ENCODE measurements at regions of chr2 and their contacts with region 1.

Region 1: GRCh38 chr2:173021939-173022371 is 53.7 kb upstream of the MAP3K20 start:
- DNase-seq: no peak
- ATAC-seq: no peak
- H3K4me3 ChIP-seq: no peak overlapping the region
- H3K4me3 Mint-ChIP-seq: no peak overlapping the region
- H3K27ac ChIP-seq: no peak overlapping the region
- H3K27ac Mint-ChIP-seq: no peak overlapping the region
- H3K4me1 ChIP-seq: no peaks in the 10 kb centered on the region
- H3K4me1 Mint-ChIP-seq: no peaks in the 10 kb centered on the region
- H3K27me3 ChIP-seq: no peaks in the 10 kb centered on the region
- H3K27me3 Mint-ChIP-seq: no peaks in the 10 kb centered on the region
- CTCF ChIP-seq: no peak

Region 2: GRCh38 chr2:172806493-172806892 is 215.5 kb before region 1 on chr2:
- CTCF ChIA-PET with region 1: no interaction called
- POLR2A ChIA-PET with region 1: no interaction called
- intact Hi-C with region 1: loop called (anchors 5 to 10 kb)
- DNase-seq: peak in 2 of 9 experiments; percentile 19 to 38
- ATAC-seq: no peak
- H3K4me3 ChIP-seq: no peak overlapping the region
- H3K4me3 Mint-ChIP-seq: no peak overlapping the region
- H3K27ac ChIP-seq: no peak overlapping the region
- H3K27ac Mint-ChIP-seq: no peak overlapping the region
- H3K4me1 ChIP-seq: no peaks in the 10 kb centered on the region
- H3K4me1 Mint-ChIP-seq: peaks cover 2% of the 10 kb centered on the region
- H3K27me3 ChIP-seq: peaks cover 0 to 4% of the 10 kb centered on the region in 2 experiments
- H3K27me3 Mint-ChIP-seq: no peaks in the 10 kb centered on the region
- CTCF ChIP-seq: peak; percentile 82

Region 3: GRCh38 chr2:172977270-172978062 is 44.5 kb before region 1 on chr2:
- CTCF ChIA-PET with region 1: interaction called, 3 read pairs
- POLR2A ChIA-PET with region 1: no interaction called
- intact Hi-C with region 1: loop called in 1 of 2 experiments (anchors 1 kb)
- DNase-seq: peak in 3 of 9 experiments; percentile 37 to 58 (median 37)
- ATAC-seq: peak; percentile 85
- H3K4me3 ChIP-seq: no peak overlapping the region
- H3K4me3 Mint-ChIP-seq: no peak overlapping the region
- H3K27ac ChIP-seq: no peak overlapping the region
- H3K27ac Mint-ChIP-seq: no peak overlapping the region
- H3K4me1 ChIP-seq: peaks cover 5% of the 10 kb centered on the region
- H3K4me1 Mint-ChIP-seq: peaks cover 8% of the 10 kb centered on the region
- H3K27me3 ChIP-seq: no peaks in the 10 kb centered on the region
- H3K27me3 Mint-ChIP-seq: peaks cover 4% of the 10 kb centered on the region
- CTCF ChIP-seq: no peak

Measured in CD8-positive, alpha-beta T cell (primary cell).